GM10248 (cell line): ENCODE measurements at regions of chr14 and their contacts with region 1.

Region 1: GRCh38 chr14:102524466-102525218 is 15.1 kb upstream of the ANKRD9 start:
- DNase-seq: peak; percentile 99
- CTCF ChIP-seq: peak; percentile 98

Region 2: DNA sequence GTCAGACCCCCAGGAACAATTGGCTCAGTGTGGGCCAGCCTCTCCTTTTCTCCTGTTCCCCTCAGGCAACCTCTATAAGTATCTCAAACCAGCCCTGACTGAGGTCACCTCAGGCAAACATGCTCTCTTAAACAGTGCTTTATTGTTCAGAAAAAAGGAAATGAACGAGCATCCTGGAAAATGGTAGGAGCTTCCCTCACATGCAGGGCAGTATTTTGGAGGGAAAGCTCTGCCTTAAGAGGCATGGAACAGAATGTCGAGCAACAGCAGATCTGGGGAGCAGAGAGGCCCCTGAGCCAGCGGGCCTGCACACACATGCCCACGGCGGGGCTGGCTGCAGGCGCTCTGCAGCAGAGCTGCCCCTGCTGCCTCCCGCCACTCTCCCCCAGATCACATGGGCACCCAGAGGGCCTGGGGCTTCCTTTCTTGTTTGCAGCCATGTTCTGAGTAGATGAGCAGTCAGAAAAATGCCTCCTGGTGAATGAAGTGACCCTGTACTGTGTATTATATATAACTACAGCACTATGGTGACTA is 261.6 kb before region 1 on chr14:
- CTCF ChIA-PET with region 1: no interaction called
- POLR2A ChIA-PET with region 1: no interaction called
- DNase-seq: no peak
- CTCF ChIP-seq: no peak

Region 3: GRCh38 chr14:102333795-102334705 is 190.6 kb before region 1 on chr14:
- CTCF ChIA-PET with region 1: no interaction called
- POLR2A ChIA-PET with region 1: no interaction called
- DNase-seq: no peak
- CTCF ChIP-seq: no peak

Region 4: DNA sequence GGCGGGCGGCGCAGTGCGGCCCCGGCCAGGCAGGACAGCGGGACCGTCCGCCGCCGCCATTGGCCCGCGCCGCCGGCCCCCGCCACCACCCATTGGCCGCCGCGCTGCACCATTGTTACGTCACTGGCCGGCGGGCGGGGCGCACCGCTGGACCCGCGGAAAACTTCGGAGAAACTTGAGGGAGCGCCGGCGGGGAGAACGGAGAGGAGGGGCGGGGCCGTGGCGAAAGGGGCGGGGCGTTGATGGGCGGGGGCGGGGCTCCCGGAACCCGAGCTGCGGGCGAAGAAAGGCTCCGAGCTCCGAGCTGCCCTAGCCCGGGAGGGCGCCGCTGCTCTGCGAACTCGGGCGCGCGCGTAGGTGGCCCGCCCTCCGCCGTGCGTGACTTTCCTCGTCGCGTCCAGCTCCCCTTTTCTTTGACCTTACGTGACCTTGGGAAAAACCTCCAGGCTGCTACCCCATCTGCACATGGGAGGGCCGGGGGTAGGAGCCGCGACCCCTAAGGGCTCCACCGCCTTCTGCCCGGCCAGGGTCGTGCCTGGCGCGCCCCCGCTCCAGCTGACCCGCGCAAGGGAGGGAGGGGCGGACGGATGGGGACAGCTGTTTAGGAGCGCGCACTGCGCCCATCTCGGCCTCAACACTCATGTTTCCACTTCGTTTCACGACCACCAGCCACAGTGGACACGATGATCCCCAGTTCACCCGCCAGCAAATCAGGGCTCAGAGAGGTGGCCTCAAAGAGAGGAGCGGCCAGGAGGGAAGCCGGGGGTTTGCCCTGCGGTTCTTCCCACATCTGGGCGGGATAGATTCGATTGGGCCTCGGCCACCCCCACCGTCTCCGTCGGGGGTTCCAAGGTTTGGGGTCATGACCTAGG is 14.7 kb before region 1 on chr14 and contains the start of gene ANKRD9:
- CTCF ChIA-PET with region 1: interaction called, 25 read pairs
- POLR2A ChIA-PET with region 1: no interaction called
- DNase-seq: peak; percentile 98
- CTCF ChIP-seq: no peak

Region 5: GRCh38 chr14:102539580-102540314 is 15.1 kb after region 1 on chr14:
- CTCF ChIA-PET with region 1: interaction called, 23 read pairs
- POLR2A ChIA-PET with region 1: no interaction called
- DNase-seq: no peak
- CTCF ChIP-seq: no peak

Region 6: DNA sequence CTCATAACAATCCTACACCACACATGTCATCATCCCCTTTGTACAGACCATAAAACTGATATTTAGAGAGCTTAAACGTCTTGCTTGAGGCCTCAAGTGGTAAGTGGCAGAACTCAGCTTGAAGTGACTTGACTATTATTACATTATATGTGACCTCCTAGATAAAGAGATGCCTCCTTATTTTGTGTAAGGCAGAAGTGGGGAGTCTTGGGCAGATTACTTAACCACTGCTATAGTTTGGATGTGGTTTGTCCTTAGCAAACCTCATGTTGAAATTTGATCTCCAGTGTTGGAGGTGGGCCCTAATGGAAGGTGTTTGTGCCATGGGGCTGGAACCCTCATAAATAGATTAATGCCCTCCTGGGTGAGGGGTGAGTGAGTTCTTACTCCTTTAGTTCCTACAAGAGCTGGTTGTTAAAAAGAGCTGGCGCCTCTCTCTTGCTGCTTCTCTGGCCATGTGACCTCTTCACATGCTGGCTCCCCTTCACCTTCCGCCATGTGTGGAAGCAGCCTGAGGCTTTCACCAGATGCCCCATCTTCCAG is 105.2 kb after region 1 on chr14:
- CTCF ChIA-PET with region 1: no interaction called
- POLR2A ChIA-PET with region 1: no interaction called
- DNase-seq: no peak
- CTCF ChIP-seq: no peak